ENCODE measurements at regions of chr19 and their contacts with region 1.

Region 1: GRCh38 chr19:58439576-58440554 is at the start of gene ZNF132:
- DNase-seq: peak; percentile 88
- ATAC-seq: peak; percentile 97
- H3K4me3 Mint-ChIP-seq: peak within 1 kb of the TSS; percentile 96
- H3K27ac Mint-ChIP-seq: peak within 1 kb of the TSS; percentile 97
- H3K4me1 Mint-ChIP-seq: peaks cover 20% of the 10 kb centered on the region
- H3K27me3 Mint-ChIP-seq: peaks cover 4% of the 10 kb centered on the region
- CTCF ChIP-seq: no peak
- total RNA-seq, gene ZNF132: 9.2 and 10.4 TPM in 2 replicates

Region 2: DNA sequence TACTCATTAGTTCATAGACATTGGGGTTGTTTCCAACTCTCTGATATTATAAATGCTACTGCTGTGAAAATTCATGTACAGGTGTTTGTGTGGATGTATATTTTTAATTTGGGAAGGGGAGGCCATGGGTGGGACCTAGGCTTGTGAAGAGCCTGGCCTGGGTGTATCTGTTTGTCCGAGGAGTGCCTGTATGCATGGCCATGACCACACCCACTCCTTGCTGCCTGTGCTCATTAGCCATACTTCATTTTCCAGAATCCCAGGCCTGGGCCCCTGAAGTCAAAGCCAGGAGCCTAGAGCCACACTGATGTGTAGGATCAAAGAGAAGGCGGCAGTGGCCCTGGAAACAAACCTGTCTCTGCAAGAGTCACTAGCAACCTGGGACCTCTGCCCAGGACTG is 124.3 kb before region 1 on chr19:
- CTCF ChIA-PET with region 1: no interaction called
- POLR2A ChIA-PET with region 1: no interaction called
- intact Hi-C with region 1: no loop called
- DNase-seq: no peak
- ATAC-seq: no peak
- H3K4me3 Mint-ChIP-seq: no peak overlapping the region
- H3K27ac Mint-ChIP-seq: no peak overlapping the region
- H3K4me1 Mint-ChIP-seq: no peaks in the 10 kb centered on the region
- H3K27me3 Mint-ChIP-seq: no peaks in the 10 kb centered on the region
- CTCF ChIP-seq: no peak

Region 3: GRCh38 chr19:58326914-58327726 is 112.7 kb before region 1 on chr19 and contains the start of gene ZSCAN22:
- CTCF ChIA-PET with region 1: no interaction called
- POLR2A ChIA-PET with region 1: interaction called, 4 read pairs
- intact Hi-C with region 1: loop called (anchors 2 kb)
- DNase-seq: peak; percentile 82
- ATAC-seq: peak; percentile 88
- H3K4me3 Mint-ChIP-seq: no peak within 1 kb of the TSS
- H3K27ac Mint-ChIP-seq: no peak within 1 kb of the TSS
- H3K4me1 Mint-ChIP-seq: peaks cover 2% of the 10 kb centered on the region
- H3K27me3 Mint-ChIP-seq: no peaks in the 10 kb centered on the region
- CTCF ChIP-seq: no peak
- total RNA-seq, gene ZSCAN22: 4.7 and 4.8 TPM in 2 replicates

Region 4: DNA sequence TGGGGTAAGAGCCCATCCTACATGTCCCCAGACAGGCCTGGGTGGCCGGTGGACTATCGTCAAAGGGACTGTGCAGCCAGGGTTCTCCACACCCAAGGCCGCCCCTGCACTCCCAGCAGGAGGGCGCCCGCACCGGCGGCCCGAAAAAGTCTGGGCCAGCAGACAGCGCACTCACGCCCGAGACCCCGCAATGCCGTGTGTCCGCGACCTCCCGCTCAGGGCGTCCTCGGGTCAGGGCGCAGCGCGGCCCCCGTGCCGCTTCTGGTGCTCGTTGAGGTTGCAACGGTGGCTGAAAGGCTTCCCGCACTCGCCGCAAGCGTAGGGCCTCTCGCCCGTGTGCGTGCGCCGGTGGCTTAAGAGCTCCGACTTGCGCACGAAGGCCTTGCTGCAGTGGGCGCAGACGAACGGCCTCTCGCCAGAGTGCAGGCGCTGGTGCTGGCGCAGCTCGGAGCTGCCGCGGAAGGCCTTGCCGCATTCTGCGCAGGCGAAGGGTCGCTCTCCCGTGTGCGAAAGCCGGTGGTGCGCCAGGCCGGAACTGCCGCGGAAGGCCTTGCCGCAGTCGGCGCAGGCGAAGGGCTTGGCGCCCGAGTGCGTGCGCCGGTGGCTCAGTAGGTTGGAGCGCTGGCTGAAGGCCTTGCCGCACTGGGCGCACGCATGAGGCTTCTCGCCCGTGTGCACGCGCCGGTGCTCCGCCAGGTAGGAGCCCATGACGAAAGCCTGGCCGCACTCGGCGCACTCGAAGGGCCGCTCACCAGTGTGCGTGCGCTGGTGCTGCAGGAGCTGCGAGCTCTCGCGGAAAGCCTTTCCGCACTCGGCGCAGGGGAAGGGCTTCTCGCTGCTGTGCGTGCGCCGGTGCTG is 83.7 kb before region 1 on chr19:
- CTCF ChIA-PET with region 1: no interaction called
- POLR2A ChIA-PET with region 1: no interaction called
- intact Hi-C with region 1: no loop called
- DNase-seq: no peak
- ATAC-seq: peak; percentile 69
- H3K4me3 Mint-ChIP-seq: peak overlapping the region; percentile 56
- H3K27ac Mint-ChIP-seq: no peak overlapping the region
- H3K4me1 Mint-ChIP-seq: peaks cover 18% of the 10 kb centered on the region
- H3K27me3 Mint-ChIP-seq: peaks cover 2% of the 10 kb centered on the region
- CTCF ChIP-seq: no peak

Region 5: GRCh38 chr19:58400916-58401839 is 38.7 kb before region 1 on chr19:
- CTCF ChIA-PET with region 1: no interaction called
- POLR2A ChIA-PET with region 1: interaction called, 3 read pairs
- intact Hi-C with region 1: loop called (anchors 1 kb)
- DNase-seq: peak; percentile 96
- ATAC-seq: peak; percentile 96
- H3K4me3 Mint-ChIP-seq: peak overlapping the region; percentile 92
- H3K27ac Mint-ChIP-seq: peak overlapping the region; percentile 90
- H3K4me1 Mint-ChIP-seq: peaks cover 12% of the 10 kb centered on the region
- H3K27me3 Mint-ChIP-seq: peaks cover 7% of the 10 kb centered on the region
- CTCF ChIP-seq: no peak

Region 6: GRCh38 chr19:58466760-58467589 is 27.1 kb after region 1 on chr19 and contains the start of gene ZNF324:
- CTCF ChIA-PET with region 1: no interaction called
- POLR2A ChIA-PET with region 1: interaction called, 4 read pairs
- intact Hi-C with region 1: loop called (anchors 1 kb)
- DNase-seq: peak; percentile 95
- ATAC-seq: peak; percentile 92
- H3K4me3 Mint-ChIP-seq: peak within 1 kb of the TSS; percentile 81
- H3K27ac Mint-ChIP-seq: peak within 1 kb of the TSS; percentile 56
- H3K4me1 Mint-ChIP-seq: peaks cover 26% of the 10 kb centered on the region
- H3K27me3 Mint-ChIP-seq: no peaks in the 10 kb centered on the region
- CTCF ChIP-seq: no peak
- total RNA-seq, gene ZNF324: 11.8 and 13.1 TPM in 2 replicates

Region 7: GRCh38 chr19:58531034-58531840 is 91.4 kb after region 1 on chr19:
- CTCF ChIA-PET with region 1: no interaction called
- POLR2A ChIA-PET with region 1: interaction called, 11 read pairs
- intact Hi-C with region 1: no loop called
- DNase-seq: no peak
- ATAC-seq: peak; percentile 31
- H3K4me3 Mint-ChIP-seq: no peak overlapping the region
- H3K27ac Mint-ChIP-seq: no peak overlapping the region
- H3K4me1 Mint-ChIP-seq: peaks cover 25% of the 10 kb centered on the region
- H3K27me3 Mint-ChIP-seq: no peaks in the 10 kb centered on the region
- CTCF ChIP-seq: no peak

Measured in activated B cell treated with CpG ODN at 0.5 μM for 24 hours (primary cell).